AG04449 (cell line): ENCODE measurements at regions of chr3 and their contacts with region 1.

Region 1: DNA sequence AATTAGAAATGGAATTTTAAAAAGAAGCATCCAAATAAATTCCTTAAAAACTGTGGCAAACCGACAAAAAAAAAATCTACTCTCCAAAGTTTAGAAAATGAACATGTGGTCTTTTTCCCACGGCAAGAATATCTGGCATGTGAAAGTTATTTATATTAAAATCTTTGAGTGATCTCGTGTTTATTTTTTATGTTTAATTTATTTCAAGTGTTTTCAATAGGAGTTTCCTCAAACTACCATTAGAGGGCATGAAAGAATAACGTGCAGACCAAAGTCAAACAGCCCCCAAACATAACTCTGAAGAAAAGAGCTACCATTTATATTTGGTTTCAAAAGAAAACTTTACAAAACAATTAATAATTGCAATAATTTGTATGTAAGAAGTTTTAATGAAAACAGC is 286.4 kb downstream of the ZIC4 start:
- DNase-seq: no peak
- H3K4me3 ChIP-seq: no peak overlapping the region
- CTCF ChIP-seq: peak; percentile 33

Region 2: GRCh38 chr3:147130461-147130860 is 10.5 kb after region 1 on chr3:
- CTCF ChIA-PET with region 1: interaction called, 20 read pairs
- POLR2A ChIA-PET with region 1: no interaction called
- DNase-seq: no peak
- H3K4me3 ChIP-seq: no peak overlapping the region
- CTCF ChIP-seq: no peak